Ascending aorta (tissue), 2 donors: ENCODE measurements at regions of chr20 and their contacts with region 1.

Region 1: DNA sequence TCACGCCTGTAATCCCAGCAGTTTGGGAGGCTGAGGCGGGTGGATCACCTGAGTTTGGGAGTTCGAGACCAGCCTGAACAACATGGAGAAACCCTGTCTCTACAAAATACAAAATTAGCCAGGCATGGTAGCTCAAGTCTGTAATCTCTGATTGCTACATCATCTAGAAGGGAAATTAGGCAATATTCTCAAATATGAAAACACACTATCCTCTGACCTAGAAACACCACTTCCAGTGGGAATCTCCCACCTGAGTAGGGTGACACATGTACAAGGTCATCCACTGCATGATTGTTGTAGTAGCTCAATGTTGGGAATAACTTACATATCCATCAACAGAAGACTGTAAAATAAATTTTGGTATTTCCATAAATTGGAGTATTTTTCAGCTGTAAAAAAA is 19.1 kb upstream of the SIRPD start:
- DNase-seq: no peak
- H3K4me3 ChIP-seq: no peak overlapping the region
- H3K27ac ChIP-seq: no peak overlapping the region
- H3K4me1 ChIP-seq: no peaks in the 10 kb centered on the region
- H3K27me3 ChIP-seq: no peaks in the 10 kb centered on the region
- CTCF ChIP-seq: no peak

Region 2: DNA sequence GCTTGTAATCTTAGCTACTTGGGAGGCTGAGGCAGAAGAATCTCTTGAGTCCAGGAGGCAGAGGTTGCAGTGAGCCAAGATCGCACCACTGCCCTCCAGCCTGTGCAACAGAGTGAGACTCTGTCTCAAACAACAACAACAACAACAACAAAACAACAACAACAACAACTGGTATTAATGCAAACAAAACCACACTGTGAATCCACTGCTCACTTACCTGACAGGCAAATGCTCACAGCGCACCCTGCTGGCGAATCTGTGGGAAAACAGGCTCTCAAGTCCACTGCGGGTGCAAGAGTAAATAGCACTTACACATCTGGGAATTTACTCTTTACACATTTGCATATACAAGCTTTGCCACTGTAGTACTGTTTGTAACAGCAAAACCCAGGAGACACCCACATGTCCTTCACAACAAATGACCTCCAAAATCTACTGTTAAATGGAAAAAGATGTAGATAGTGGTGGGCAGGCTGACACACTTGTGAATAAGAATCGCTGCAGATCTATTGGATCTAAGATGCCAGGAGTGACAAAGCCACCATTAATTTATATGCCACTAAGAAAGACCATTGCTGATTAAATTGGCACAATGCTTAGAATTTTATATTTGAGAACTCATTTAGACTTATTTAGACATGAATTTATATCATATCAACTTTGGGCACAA is 139.3 kb before region 1 on chr20:
- intact Hi-C with region 1: no loop called
- DNase-seq: peak in 1 of 2 donors; percentile 75
- H3K4me3 ChIP-seq: no peak overlapping the region
- H3K27ac ChIP-seq: no peak overlapping the region
- H3K4me1 ChIP-seq: no peaks in the 10 kb centered on the region
- H3K27me3 ChIP-seq: no peaks in the 10 kb centered on the region
- CTCF ChIP-seq: peak; percentile 63 to 79 (median 67)

Region 3: GRCh38 chr20:1619861-1620444 is 43.3 kb after region 1 on chr20 and contains the start of gene SIRPB1:
- intact Hi-C with region 1: loop called (anchors 5 kb)
- DNase-seq: no peak
- H3K4me3 ChIP-seq: no peak within 1 kb of the TSS
- H3K27ac ChIP-seq: no peak within 1 kb of the TSS
- H3K4me1 ChIP-seq: no peaks in the 10 kb centered on the region
- H3K27me3 ChIP-seq: no peaks in the 10 kb centered on the region
- CTCF ChIP-seq: no peak
- total RNA-seq, gene SIRPB1: 0.43 TPM

Region 4: DNA sequence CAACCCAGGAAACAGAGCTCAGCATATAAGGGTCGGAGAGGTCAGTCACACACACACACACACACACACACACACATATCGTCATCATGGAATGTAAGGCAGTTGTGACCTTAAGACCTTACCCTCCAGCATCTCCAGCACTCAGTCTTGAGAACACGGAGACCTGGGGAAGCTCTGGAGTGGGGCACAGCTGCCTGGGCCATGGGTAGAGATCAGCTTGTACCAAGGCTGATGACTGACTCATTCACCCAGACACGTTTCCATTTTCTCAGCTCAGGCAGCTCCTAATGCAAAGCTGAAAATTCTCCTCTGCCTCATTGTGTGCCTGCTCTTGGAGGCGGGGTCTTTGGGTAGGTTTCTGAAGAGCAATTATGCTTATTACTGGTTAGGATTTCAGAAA is 455.5 kb after region 1 on chr20:
- intact Hi-C with region 1: no loop called
- DNase-seq: no peak
- H3K4me3 ChIP-seq: no peak overlapping the region
- H3K27ac ChIP-seq: no peak overlapping the region
- H3K4me1 ChIP-seq: no peaks in the 10 kb centered on the region
- H3K27me3 ChIP-seq: no peaks in the 10 kb centered on the region
- CTCF ChIP-seq: no peak